ENCODE measurements at regions of chr7 and their contacts with region 1.

Region 1: GRCh38 chr7:2354186-2354938 is at the start of gene EIF3B:
- DNase-seq: peak; percentile 85
- H3K4me3 Mint-ChIP-seq: peak within 1 kb of the TSS; percentile 90
- H3K27ac Mint-ChIP-seq: peak within 1 kb of the TSS; percentile 98
- H3K4me1 Mint-ChIP-seq: peaks cover 11% of the 10 kb centered on the region
- H3K27me3 Mint-ChIP-seq: no peaks in the 10 kb centered on the region
- total RNA-seq, gene EIF3B: 242 and 245 TPM in 2 replicates

Region 2: DNA sequence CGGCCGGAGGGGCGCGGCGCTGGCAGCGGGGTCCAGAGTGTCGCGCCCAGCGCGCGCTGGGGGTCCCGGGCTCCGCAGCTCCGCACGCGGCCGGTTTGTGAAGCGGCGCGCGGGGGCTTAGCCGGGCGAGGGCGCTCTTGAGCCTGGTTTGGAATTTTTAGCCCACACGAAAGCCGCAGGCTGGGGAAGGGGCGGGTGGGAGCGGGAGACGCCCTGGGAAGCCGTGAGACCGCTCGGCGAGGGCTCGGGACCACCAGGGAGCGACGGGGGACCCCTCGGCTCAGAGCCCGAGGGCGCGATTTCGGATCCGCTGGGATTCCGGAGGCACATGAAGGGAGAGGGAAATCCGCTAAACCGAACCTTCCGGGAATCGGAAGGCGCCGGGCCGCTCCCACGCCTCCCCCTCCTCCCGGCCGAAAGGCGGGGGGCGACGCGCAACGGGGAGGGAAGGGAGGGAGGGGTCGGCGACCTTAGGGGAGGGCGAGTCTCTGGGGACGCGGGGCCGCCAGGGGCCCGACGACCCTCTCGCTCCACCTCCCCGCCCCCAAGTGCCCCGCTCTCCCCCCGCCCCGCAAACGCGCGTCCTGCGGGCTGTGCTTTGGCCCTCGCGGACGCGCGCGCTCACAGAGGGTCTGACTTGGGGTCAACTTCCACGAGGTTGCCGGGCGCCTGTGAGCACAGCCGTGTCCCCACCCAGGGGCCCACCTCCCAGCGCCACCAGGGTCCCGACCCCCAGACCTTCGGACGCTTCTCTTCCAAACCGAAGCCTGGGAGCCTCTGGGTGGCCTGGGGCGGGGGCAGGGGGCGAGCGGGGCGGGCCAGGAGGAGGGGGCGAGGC is 689.4 kb before region 1 on chr7:
- intact Hi-C with region 1: loop called (anchors 10 kb)
- DNase-seq: peak; percentile 31
- H3K4me3 Mint-ChIP-seq: no peak overlapping the region
- H3K27ac Mint-ChIP-seq: no peak overlapping the region
- H3K4me1 Mint-ChIP-seq: no peaks in the 10 kb centered on the region
- H3K27me3 Mint-ChIP-seq: peaks cover 41% of the 10 kb centered on the region

Region 3: GRCh38 chr7:1794888-1795542 is 559.3 kb before region 1 on chr7:
- intact Hi-C with region 1: loop called (anchors 10 kb)
- DNase-seq: no peak
- H3K4me3 Mint-ChIP-seq: no peak overlapping the region
- H3K27ac Mint-ChIP-seq: no peak overlapping the region
- H3K4me1 Mint-ChIP-seq: no peaks in the 10 kb centered on the region
- H3K27me3 Mint-ChIP-seq: peaks cover 16% of the 10 kb centered on the region

Region 4: DNA sequence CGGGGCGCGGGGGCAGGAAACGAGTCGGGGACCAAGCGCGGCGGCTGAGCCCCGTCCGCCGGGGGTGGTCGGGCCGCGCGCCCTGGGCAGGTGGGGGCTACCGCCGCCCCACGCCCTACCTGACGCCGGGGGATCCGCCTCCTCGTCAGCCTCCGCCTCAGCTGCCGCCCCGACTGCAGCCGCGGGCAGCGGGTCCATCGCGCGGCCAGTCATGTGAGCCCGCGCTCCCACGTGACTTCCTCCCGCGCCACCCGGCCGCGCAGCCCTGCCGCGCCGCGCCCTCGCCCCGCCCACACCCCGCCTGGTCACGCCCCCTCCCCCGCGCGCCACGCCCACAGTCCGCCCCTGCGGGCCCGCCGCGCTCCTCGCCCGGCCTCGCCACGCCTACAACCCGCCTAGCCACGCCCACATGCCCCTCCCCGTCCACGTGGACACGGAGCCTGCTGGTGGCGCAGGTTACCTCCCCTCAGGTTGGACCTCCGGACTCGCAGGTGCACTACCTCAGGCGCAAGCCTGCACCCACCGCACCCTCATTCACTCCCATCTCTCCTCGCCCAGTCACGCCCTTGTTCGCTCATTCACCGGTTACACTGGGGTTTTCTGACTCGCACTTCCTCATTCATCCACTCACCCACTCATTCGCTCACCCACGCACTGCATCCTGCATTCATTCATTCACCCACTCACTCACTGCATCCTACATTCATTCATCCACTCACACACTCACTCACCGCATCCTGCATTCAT is 40.0 kb before region 1 on chr7 and contains the start of gene SNX8:
- intact Hi-C with region 1: loop called (anchors 1 kb)
- DNase-seq: peak; percentile 91
- H3K4me3 Mint-ChIP-seq: peak within 1 kb of the TSS; percentile 88
- H3K27ac Mint-ChIP-seq: peak within 1 kb of the TSS; percentile 69
- H3K4me1 Mint-ChIP-seq: peaks cover 13% of the 10 kb centered on the region
- H3K27me3 Mint-ChIP-seq: no peaks in the 10 kb centered on the region
- total RNA-seq, gene SNX8: 31.8 and 38.7 TPM in 2 replicates

Region 5: DNA sequence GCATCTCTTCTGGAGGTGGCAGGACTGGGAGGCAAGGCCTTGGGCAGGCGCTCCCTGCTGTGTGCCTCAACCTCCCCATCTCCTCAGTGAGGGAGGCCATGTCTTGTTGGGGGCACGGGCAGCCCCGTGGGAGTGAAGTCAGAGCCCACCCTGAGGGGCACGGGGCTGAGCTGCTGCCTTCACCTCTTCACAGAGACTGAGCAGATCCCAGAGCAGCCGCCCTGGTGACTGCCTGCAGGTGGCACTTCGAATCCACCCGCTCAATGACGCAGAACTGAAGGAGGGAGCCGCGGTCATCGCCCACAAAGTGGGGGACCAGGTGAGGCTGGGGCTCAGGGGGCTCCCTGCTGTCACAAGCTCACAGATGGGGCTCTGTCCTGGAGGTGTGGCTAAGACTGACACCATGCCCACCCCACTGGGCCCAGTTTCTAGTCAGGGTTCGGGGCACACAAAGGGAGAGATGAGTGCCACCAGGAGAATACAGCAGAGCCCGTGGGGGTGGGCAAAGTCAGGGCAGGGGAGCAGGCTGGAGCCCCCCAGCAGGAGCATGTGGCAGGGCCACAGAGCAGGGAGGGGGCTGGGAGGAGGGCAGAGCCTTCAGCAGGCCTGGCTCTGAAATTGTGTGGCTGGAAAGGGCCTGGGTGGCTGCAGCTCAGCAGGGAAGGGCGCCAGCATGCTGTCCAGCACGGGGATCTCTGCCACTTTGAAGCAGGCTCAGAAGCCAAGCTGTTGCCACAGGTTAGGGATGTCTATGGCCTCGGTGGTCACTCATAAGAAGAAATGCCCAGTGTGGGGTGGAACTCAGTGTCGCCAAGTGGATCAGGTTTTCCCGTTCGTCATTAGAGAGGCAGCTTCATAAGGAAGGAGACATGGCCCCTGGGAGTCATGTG is 30.2 kb after region 1 on chr7:
- intact Hi-C with region 1: no loop called
- DNase-seq: no peak
- H3K4me3 Mint-ChIP-seq: no peak overlapping the region
- H3K27ac Mint-ChIP-seq: no peak overlapping the region
- H3K4me1 Mint-ChIP-seq: no peaks in the 10 kb centered on the region
- H3K27me3 Mint-ChIP-seq: no peaks in the 10 kb centered on the region

Measured in activated T-helper 2 cell treated with anti-CD3 and anti-CD28 coated beads, Interferon-gamma antibody, Interleukin-2, Interleukin-4, amounts not matched to agents 10 μg/mL and 5 μg/mL and 100 μg/mL, durations not matched to agents 14 hours and 24 hours and 36 hours (primary cell).